CD4-positive, alpha-beta T cell (primary cell): ENCODE measurements at regions of chr1 and their contacts with region 1.

Region 1: DNA sequence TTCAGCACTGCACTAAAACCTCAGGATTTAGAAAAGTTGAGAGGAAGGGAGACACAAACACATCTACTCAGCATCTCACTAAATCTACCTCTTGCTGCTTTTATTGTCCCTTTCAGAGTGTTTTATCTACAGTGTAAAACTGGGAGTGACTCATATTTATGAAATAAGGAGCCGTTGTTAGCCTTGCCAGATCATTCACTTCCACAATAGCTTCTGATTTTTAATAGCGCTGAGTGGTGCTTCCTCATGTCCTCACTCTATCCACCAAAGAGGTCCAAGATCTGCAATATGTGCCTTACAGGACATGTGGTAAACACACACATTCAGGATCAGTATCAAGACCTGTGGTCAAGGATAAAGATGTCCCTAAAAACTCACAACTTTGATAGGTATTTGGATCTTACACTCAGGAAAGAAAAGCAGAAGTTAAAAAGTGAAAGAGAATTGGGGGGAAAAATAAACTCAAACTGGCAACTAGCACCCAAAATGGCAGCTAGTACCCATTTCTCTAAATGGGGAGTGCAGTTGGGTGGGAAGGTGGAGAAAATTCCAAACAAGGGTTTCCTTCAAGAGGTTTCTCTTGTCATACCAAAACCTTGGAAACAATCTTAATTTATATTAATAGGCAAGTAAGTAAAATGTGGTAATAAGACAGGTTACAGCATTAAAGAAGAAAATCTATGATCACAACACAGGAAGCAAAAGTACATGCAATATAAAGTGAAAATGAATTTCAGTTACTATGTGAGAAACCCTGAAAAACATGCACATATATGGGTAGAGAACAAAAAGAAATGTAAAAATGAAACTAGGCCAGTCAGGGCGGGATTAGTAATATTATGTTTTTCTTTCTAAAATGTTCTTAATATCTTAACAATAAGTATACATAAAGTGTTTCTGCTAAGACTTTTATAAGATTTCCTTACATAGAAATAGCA is 15.9 kb downstream of the DUSP10 start:
- DNase-seq: peak in 2 of 14 experiments; percentile 37 to 70
- ATAC-seq: peak; percentile 85
- H3K4me3 ChIP-seq: peak overlapping the region; percentile 6
- H3K4me3 Mint-ChIP-seq: peak overlapping the region; percentile 43
- H3K27ac ChIP-seq: no peak overlapping the region
- H3K27ac Mint-ChIP-seq: peak overlapping the region; percentile 13
- H3K4me1 ChIP-seq: peaks cover 20% of the 10 kb centered on the region
- H3K4me1 Mint-ChIP-seq: peaks cover 71% of the 10 kb centered on the region
- H3K27me3 ChIP-seq: no peaks in the 10 kb centered on the region
- H3K27me3 Mint-ChIP-seq: no peaks in the 10 kb centered on the region
- CTCF ChIP-seq: no peak

Region 2: DNA sequence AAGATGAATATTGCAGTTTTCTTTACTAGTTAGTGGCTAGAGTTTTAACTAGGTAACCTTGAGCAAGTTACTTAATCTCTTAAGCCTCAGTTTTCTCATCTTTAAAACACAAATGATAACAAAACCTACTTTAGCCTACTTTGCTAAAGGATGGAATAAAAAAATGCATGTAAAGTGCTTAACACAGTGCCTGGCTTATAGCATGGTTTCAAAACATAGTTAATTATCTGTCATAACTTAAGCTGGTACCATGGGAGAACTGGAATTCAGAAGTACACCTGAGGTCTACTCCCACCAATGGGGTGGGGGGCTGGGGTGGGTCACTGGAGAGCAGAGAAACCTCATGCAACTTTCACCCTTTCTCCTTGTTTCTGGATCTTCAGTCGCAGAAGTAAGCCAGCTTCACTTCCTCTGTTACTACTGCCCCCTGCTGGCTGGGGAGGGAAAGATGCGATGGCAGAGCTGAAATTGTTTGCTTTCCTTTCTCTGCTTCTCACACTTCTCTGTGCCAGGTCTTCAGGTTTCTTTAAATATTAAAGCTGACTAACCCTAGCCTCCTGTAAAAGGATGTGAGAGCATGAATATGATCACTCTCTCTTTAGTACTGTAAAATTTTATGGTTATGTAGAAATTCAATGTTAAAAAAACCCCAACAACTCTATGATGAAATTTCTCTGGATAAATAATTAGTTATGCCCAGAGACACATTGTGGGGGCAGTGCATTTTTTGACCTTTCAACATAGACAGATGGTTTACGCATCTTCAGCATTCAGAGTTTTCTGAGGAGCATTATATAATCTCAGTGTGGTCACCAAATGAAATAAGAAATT is 522.6 kb before region 1 on chr1:
- CTCF ChIA-PET with region 1: no interaction called
- POLR2A ChIA-PET with region 1: no interaction called
- intact Hi-C with region 1: no loop called
- DNase-seq: peak; percentile 18 to 69 (median 43)
- ATAC-seq: no peak
- H3K4me3 ChIP-seq: no peak overlapping the region
- H3K4me3 Mint-ChIP-seq: no peak overlapping the region
- H3K27ac ChIP-seq: no peak overlapping the region
- H3K27ac Mint-ChIP-seq: no peak overlapping the region
- H3K4me1 ChIP-seq: no peaks in the 10 kb centered on the region
- H3K4me1 Mint-ChIP-seq: no peaks in the 10 kb centered on the region
- H3K27me3 ChIP-seq: no peaks in the 10 kb centered on the region
- H3K27me3 Mint-ChIP-seq: peaks cover 8% of the 10 kb centered on the region
- CTCF ChIP-seq: peak; percentile 71

Region 3: GRCh38 chr1:221708987-221709386 is 17.0 kb before region 1 on chr1:
- CTCF ChIA-PET with region 1: interaction called, 3 read pairs
- POLR2A ChIA-PET with region 1: interaction called, 17 read pairs
- intact Hi-C with region 1: loop called in 1 of 2 experiments (anchors 1 kb)
- DNase-seq: peak in 13 of 14 experiments; percentile 7 to 92 (median 39)
- ATAC-seq: peak; percentile 42
- H3K4me3 ChIP-seq: no peak overlapping the region
- H3K4me3 Mint-ChIP-seq: no peak overlapping the region
- H3K27ac ChIP-seq: peak overlapping the region in 1 of 2 donors; percentile 75
- H3K27ac Mint-ChIP-seq: peak overlapping the region; percentile 78
- H3K4me1 ChIP-seq: peaks cover 46% of the 10 kb centered on the region
- H3K4me1 Mint-ChIP-seq: peaks cover 71% of the 10 kb centered on the region
- H3K27me3 ChIP-seq: no peaks in the 10 kb centered on the region
- H3K27me3 Mint-ChIP-seq: no peaks in the 10 kb centered on the region
- CTCF ChIP-seq: no peak